IMR-90 (cell line): ENCODE measurements at regions of chrX and their contacts with region 1.

Region 1: GRCh38 chrX:30228526-30228925 is 1.9 kb upstream of the MAGEB3 start:
- DNase-seq: no peak
- ATAC-seq: no peak
- H3K4me3 ChIP-seq: no peak overlapping the region
- H3K27ac ChIP-seq: no peak overlapping the region
- H3K4me1 ChIP-seq: no peaks in the 10 kb centered on the region
- H3K27me3 ChIP-seq: no peaks in the 10 kb centered on the region; the same call in 1 of the 2 replicates
- CTCF ChIP-seq: no peak
- POLR2A ChIP-seq: no peak
- RAD21 ChIP-seq: no peak

Region 2: GRCh38 chrX:30060718-30061117 is 167.8 kb before region 1 on chrX:
- CTCF ChIA-PET with region 1: no interaction called
- POLR2A ChIA-PET with region 1: no interaction called
- dilution Hi-C with region 1: no loop called
- in situ Hi-C with region 1: no loop called
- intact Hi-C with region 1: no loop called
- DNase-seq: peak; percentile 21
- ATAC-seq: peak; percentile 72; the same call in 1 of the 2 replicates
- H3K4me3 ChIP-seq: no peak overlapping the region
- H3K27ac ChIP-seq: no peak overlapping the region
- H3K4me1 ChIP-seq: no peaks in the 10 kb centered on the region
- H3K27me3 ChIP-seq: no peaks in the 10 kb centered on the region
- CTCF ChIP-seq: peak; percentile 52
- POLR2A ChIP-seq: no peak
- RAD21 ChIP-seq: peak; percentile 60

Region 3: GRCh38 chrX:30301963-30302362 is 73.4 kb after region 1 on chrX:
- CTCF ChIA-PET with region 1: interaction called, 11 read pairs
- POLR2A ChIA-PET with region 1: no interaction called
- dilution Hi-C with region 1: no loop called
- in situ Hi-C with region 1: no loop called
- intact Hi-C with region 1: no loop called
- DNase-seq: peak; percentile 43
- ATAC-seq: peak; percentile 59
- H3K4me3 ChIP-seq: no peak overlapping the region
- H3K27ac ChIP-seq: no peak overlapping the region
- H3K4me1 ChIP-seq: no peaks in the 10 kb centered on the region
- H3K27me3 ChIP-seq: no peaks in the 10 kb centered on the region; the same call in 1 of the 2 replicates
- CTCF ChIP-seq: no peak
- POLR2A ChIP-seq: no peak
- RAD21 ChIP-seq: no peak

Region 4: GRCh38 chrX:30635630-30636029 is 407.1 kb after region 1 on chrX:
- CTCF ChIA-PET with region 1: no interaction called
- POLR2A ChIA-PET with region 1: no interaction called
- dilution Hi-C with region 1: no loop called
- in situ Hi-C with region 1: no loop called
- intact Hi-C with region 1: no loop called
- DNase-seq: peak; percentile 32
- ATAC-seq: peak; percentile 40
- H3K4me3 ChIP-seq: no peak overlapping the region
- H3K27ac ChIP-seq: no peak overlapping the region
- H3K4me1 ChIP-seq: no peaks in the 10 kb centered on the region
- H3K27me3 ChIP-seq: no peaks in the 10 kb centered on the region
- CTCF ChIP-seq: peak; percentile 56
- POLR2A ChIP-seq: no peak
- RAD21 ChIP-seq: peak; percentile 70